Esophagus muscularis mucosa (tissue), 4 donors: ENCODE measurements at regions of chr11 and their contacts with region 1.

Region 1: GRCh38 chr11:126440792-126441514 is 85.5 kb downstream of the ST3GAL4 start:
- DNase-seq: peak; percentile 95
- H3K4me3 ChIP-seq: no peak overlapping the region
- H3K27ac ChIP-seq: no peak overlapping the region
- H3K4me1 ChIP-seq: peaks cover 3 to 12% (median 8%) of the 10 kb centered on the region in 4 donors
- H3K27me3 ChIP-seq: peaks cover 0 to 8% (median 0%) of the 10 kb centered on the region in 4 donors
- CTCF ChIP-seq: peak; percentile 92 to 98 (median 95)
- EP300 ChIP-seq: no peak
- POLR2A ChIP-seq: no peak

Region 2: GRCh38 chr11:126480410-126481302 is 39.7 kb after region 1 on chr11:
- intact Hi-C with region 1: loop called (anchors 1 kb)
- DNase-seq: peak; percentile 96
- H3K4me3 ChIP-seq: peak overlapping the region in 3 of 4 donors; percentile 10 to 30 (median 21)
- H3K27ac ChIP-seq: peak overlapping the region; percentile 68 to 77 (median 74)
- H3K4me1 ChIP-seq: peaks cover 5 to 14% (median 6%) of the 10 kb centered on the region in 4 donors
- H3K27me3 ChIP-seq: no peaks in the 10 kb centered on the region
- CTCF ChIP-seq: peak; percentile 93 to 95 (median 95)
- EP300 ChIP-seq: no peak
- POLR2A ChIP-seq: no peak

Region 3: GRCh38 chr11:127345819-127346459 is 905.0 kb after region 1 on chr11:
- intact Hi-C with region 1: loop called (anchors 2 kb)
- DNase-seq: no peak
- H3K4me3 ChIP-seq: peak overlapping the region in 1 of 4 donors; percentile 7
- H3K27ac ChIP-seq: no peak overlapping the region
- H3K4me1 ChIP-seq: no peaks in the 10 kb centered on the region
- H3K27me3 ChIP-seq: peaks cover 0 to 5% (median 0%) of the 10 kb centered on the region in 4 donors
- CTCF ChIP-seq: peak; percentile 46 to 61 (median 50)
- EP300 ChIP-seq: no peak
- POLR2A ChIP-seq: no peak